Astrocyte of the cerebellum (primary cell): ENCODE measurements at regions of chr2 and their contacts with region 1.

Region 1: DNA sequence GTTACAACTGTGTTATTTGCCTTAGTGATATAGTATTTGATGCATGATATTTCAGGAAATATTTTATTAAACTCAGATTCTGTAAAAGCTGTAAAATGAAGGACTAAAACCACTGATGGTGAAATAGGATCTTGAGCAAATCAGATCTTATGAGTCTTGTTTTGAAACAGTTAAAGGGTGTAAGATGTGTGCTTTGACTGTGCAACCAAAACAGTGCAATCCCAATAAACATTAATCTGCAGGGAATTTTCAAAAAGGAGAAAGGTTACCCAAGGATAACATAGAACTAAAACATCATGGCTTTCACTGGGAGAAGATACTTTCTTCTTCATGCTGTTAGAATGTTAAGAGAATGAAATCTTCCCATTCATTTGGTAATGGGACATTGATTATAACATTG is 378.7 kb downstream of the PARD3B start:
- DNase-seq: no peak
- H3K4me3 ChIP-seq: no peak overlapping the region
- CTCF ChIP-seq: no peak

Region 2: GRCh38 chr2:204964413-204964812 is 40.5 kb after region 1 on chr2:
- in situ Hi-C with region 1: loop called (anchors 5 kb)
- DNase-seq: no peak
- H3K4me3 ChIP-seq: no peak overlapping the region
- CTCF ChIP-seq: no peak

Region 3: DNA sequence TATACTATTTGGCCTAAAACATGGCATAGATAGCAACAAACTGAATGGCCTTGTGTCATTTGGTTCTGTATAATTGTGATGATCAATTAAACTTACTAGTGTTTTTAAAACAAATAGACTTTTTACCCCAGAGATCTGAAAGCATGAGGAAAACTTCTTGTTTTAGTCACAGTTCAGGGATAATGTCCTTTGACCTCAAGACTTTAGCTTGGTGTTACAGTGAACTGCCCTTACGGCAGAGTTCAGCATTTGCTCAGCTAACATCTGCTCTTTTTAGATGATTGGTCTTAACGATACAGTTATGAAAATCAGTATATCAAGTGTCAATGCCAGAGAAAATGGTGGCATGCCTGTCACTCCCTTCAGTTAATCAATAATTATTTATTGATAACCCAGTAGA is 50.5 kb after region 1 on chr2:
- in situ Hi-C with region 1: no loop called
- DNase-seq: no peak
- H3K4me3 ChIP-seq: no peak overlapping the region
- CTCF ChIP-seq: no peak